Right ventricle myocardium inferior (tissue), 1 donor: ENCODE measurements at regions of chr13 and their contacts with region 1.

Region 1: GRCh38 chr13:30341815-30342570 is 34.6 kb upstream of the KATNAL1 start:
- DNase-seq: peak; percentile 92
- ATAC-seq: peak; percentile 90

Region 2: GRCh38 chr13:30306762-30307193 is 35.2 kb before region 1 on chr13:
- intact Hi-C with region 1: loop called (anchors 2 kb)
- DNase-seq: peak; percentile 96
- ATAC-seq: peak; percentile 97

Region 3: DNA sequence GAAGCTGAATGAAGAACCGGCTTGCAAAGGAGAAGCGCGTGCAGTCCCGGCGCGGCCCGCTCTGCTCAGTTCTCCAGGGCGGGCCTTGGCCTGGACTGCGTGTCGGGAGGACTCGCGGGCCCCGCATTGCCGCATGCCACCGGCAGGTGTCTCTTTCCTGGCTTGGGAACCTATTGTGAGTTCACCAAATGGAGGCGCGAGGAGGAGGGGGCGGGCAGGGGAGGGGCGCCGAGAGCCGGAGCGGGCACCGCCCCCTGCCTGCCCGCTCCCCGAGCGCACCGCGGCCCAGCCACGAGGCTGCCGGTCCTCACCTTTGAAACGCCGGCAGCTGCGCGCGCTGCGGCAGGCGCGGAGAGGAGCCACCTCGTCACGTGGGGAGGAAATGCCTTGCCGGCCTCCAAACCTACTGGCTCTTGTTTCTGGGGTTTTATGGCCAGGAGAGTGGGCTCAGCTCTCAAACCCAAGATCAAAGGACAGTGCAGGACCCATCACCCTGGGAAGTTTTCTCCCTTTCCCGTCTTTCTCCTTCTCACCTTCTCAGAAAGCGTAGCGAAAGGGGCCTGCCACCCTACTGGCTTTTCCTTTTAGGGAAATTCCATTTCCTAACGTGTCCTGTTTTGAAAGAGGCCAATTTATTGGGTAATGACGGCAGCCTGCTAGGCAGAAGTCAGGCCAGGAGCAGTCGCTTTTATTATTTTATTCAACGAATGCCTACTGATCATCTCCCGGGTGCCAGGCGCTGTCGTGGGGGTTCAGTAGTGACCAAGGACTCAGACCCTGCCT is 66.5 kb after region 1 on chr13:
- intact Hi-C with region 1: loop called (anchors 5 kb)
- DNase-seq: peak; percentile 97
- ATAC-seq: peak; percentile 94

Region 4: GRCh38 chr13:30486230-30487074 is 144.5 kb after region 1 on chr13:
- intact Hi-C with region 1: no loop called
- DNase-seq: no peak
- ATAC-seq: no peak